Common myeloid progenitor, CD34-positive (primary cell): ENCODE measurements at regions of chr11 and their contacts with region 1.

Region 1: DNA sequence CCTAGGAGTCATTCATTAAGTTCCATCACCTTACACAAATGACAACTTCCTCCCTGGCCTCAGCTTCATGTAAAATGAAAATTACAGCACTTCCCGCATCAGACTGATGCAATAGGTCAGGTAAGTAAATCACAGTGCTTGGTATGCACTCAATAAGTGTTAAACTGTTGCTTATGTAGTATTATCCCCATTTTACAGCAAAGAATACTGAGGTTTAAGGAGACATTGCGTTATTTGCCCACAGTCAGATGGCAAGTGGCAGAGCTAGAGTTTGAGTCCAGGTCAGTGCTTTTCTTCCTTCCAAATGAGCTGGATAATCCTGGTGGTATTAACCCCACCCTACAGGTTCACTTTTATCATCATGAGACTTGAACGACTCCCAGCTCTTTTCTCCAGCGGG is 29.7 kb downstream of the WT1 start:
- DNase-seq: no peak
- H3K4me3 ChIP-seq: no peak overlapping the region
- H3K27ac ChIP-seq: no peak overlapping the region
- H3K4me1 ChIP-seq: peaks cover 0 to 1% (median 0%) of the 10 kb centered on the region in 4 experiments
- H3K27me3 ChIP-seq: no peaks in the 10 kb centered on the region

Region 2: GRCh38 chr11:32420937-32421901 is 15.6 kb after region 1 on chr11:
- CTCF ChIA-PET with region 1: interaction called, 15 read pairs
- POLR2A ChIA-PET with region 1: no interaction called
- DNase-seq: peak; percentile 92 to 97 (median 96)
- H3K4me3 ChIP-seq: peak overlapping the region in 5 of 7 experiments; percentile 4 to 59 (median 54)
- H3K27ac ChIP-seq: peak overlapping the region; percentile 79 to 92
- H3K4me1 ChIP-seq: peaks cover 27 to 90% (median 75%) of the 10 kb centered on the region in 4 experiments
- H3K27me3 ChIP-seq: peaks cover 0 to 3% (median 0%) of the 10 kb centered on the region in 5 experiments

Region 3: DNA sequence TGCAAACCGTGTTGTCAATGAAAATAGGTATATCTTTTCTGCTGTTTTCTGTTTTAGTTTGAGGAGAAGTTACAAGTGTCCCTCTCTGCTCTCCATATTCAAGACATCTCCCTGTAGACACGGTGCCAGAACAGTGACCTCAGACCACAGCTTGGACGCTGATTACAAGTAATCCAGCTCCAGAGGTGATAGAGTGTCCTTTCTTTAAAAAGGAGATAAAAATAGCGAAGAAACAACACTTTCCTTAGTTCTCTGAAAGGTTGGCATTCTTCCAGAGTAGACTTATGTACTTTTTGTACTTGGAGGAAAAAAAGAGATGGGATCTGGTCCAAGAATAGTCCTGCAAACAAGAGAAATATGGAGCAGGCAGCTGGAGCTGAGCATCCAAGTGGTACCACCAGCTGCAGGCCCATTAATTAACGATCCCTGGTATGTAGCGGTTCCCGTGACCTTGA is 72.7 kb after region 1 on chr11:
- CTCF ChIA-PET with region 1: no interaction called
- POLR2A ChIA-PET with region 1: no interaction called
- DNase-seq: no peak
- H3K4me3 ChIP-seq: no peak overlapping the region
- H3K27ac ChIP-seq: no peak overlapping the region
- H3K4me1 ChIP-seq: no peaks in the 10 kb centered on the region
- H3K27me3 ChIP-seq: no peaks in the 10 kb centered on the region